Activated T-helper 1 cell treated with anti-CD3 and anti-CD28 coated beads, Interleukin-12 subunit alpha, Interleukin-12 subunit beta, Interleukin-2, Interleukin-4 antibody, amounts not matched to agents 30 ng/mL and 10 ng/mL and 1 ng/mL, durations not matched to agents 14 hours and 24 hours and 36 hours (primary cell): ENCODE measurements at regions of chr2 and their contacts with region 1.

Region 1: GRCh38 chr2:8234757-8235374 is 447.0 kb upstream of the ID2 start:
- DNase-seq: no peak
- H3K4me3 Mint-ChIP-seq: no peak overlapping the region
- H3K27ac Mint-ChIP-seq: no peak overlapping the region
- H3K4me1 Mint-ChIP-seq: peaks cover 53% of the 10 kb centered on the region
- H3K27me3 Mint-ChIP-seq: peaks cover 9% of the 10 kb centered on the region

Region 2: DNA sequence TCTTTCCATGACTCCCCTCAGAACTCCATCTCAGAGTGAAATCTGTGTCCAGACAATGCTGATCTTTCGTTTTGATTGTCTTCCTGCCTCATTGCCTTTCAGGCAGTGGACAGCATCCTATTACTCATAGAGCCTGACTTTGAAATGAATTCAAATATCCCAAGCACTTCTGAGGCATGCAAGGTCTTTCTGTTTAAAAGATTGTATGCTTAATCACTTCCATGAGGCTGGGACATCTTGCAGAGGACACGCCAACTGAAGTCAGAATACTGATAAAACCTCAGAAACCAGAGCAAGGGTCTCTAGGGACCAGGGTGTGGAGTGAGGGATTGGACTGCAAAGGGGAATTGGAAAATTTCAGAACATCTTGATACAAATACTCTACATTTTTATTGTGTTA is 389.5 kb before region 1 on chr2:
- intact Hi-C with region 1: loop called (anchors 5 kb)
- DNase-seq: no peak
- H3K4me3 Mint-ChIP-seq: no peak overlapping the region
- H3K27ac Mint-ChIP-seq: no peak overlapping the region
- H3K4me1 Mint-ChIP-seq: peaks cover 57% of the 10 kb centered on the region
- H3K27me3 Mint-ChIP-seq: no peaks in the 10 kb centered on the region

Region 3: DNA sequence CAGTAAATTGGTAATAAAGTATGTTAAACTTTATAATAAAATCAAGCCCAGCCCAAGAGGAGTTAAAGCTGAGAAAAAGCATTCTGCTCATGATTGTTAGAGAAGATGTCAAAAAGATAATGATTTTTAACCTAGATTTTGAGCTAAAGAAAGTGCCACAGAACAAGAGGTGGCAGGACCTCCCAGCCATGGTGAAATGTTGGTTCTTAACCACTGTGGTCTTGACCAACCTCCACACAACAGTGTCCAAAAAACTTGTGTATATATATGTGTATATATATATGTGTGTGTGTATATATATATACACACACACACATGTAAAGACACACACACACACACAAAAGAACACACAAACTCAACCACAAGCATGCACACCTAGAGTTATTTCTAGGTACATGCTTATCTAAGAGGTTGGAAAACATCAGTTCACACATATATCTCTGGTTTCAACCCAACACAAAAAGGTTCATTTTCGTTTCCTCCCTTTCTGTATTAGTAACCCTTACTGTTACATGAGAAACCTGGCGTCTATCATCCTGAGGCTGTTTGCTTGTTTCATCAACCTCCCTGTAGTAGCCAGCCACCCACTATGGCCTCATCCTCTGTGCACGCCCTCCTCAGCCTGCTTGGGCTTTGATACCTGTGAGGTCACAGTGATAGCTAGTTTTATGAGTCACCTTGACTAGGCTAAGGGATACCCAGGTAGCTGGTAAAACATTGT is 184.9 kb before region 1 on chr2:
- intact Hi-C with region 1: loop called (anchors 1 kb)
- DNase-seq: peak; percentile 52
- H3K4me3 Mint-ChIP-seq: peak overlapping the region; percentile 43
- H3K27ac Mint-ChIP-seq: peak overlapping the region; percentile 93
- H3K4me1 Mint-ChIP-seq: peaks cover 48% of the 10 kb centered on the region
- H3K27me3 Mint-ChIP-seq: no peaks in the 10 kb centered on the region

Region 4: GRCh38 chr2:8247905-8248622 is 13.2 kb after region 1 on chr2:
- intact Hi-C with region 1: loop called (anchors 1 kb)
- DNase-seq: no peak
- H3K4me3 Mint-ChIP-seq: no peak overlapping the region
- H3K27ac Mint-ChIP-seq: no peak overlapping the region
- H3K4me1 Mint-ChIP-seq: peaks cover 10% of the 10 kb centered on the region
- H3K27me3 Mint-ChIP-seq: peaks cover 9% of the 10 kb centered on the region

Region 5: DNA sequence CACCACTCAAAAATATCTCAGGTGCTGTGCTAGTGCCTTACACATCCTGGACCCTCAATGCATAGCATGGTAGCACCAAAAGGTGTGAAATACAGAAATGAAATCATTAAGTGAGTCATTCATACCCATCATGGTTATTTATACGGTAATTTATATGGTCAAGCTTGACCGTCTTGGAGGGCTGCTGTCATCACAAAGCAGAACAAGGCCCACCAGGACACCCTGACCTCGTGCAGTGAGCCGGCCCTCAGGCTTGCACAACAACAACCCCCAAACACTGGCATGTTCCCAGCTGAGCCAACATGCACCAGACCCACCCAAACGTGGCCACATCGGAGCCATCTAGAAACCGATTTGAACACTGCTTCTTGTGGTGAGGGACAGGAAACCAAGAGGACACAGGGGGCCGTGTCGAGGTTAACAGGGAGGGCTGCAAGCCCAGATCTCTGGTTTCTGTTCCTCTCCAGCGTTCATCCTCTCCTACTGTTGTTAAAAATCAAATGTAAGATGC is 68.5 kb after region 1 on chr2:
- intact Hi-C with region 1: loop called (anchors 1 kb)
- DNase-seq: peak; percentile 77
- H3K4me3 Mint-ChIP-seq: peak overlapping the region; percentile 65
- H3K27ac Mint-ChIP-seq: peak overlapping the region; percentile 85
- H3K4me1 Mint-ChIP-seq: peaks cover 91% of the 10 kb centered on the region
- H3K27me3 Mint-ChIP-seq: peaks cover 7% of the 10 kb centered on the region

Region 6: GRCh38 chr2:8477552-8478470 is 242.9 kb after region 1 on chr2:
- intact Hi-C with region 1: loop called (anchors 5 kb)
- DNase-seq: no peak
- H3K4me3 Mint-ChIP-seq: peak overlapping the region; percentile 31
- H3K27ac Mint-ChIP-seq: peak overlapping the region; percentile 76
- H3K4me1 Mint-ChIP-seq: peaks cover 97% of the 10 kb centered on the region
- H3K27me3 Mint-ChIP-seq: no peaks in the 10 kb centered on the region